Calu3 (cell line): ENCODE measurements at regions of chr3 and their contacts with region 1.

Region 1: GRCh38 chr3:152961323-152961722 is 126.4 kb downstream of the P2RY1 start:
- DNase-seq: peak; percentile 80
- H3K4me3 Mint-ChIP-seq: peak overlapping the region; percentile 4
- H3K27ac Mint-ChIP-seq: peak overlapping the region; percentile 23
- H3K4me1 Mint-ChIP-seq: peaks cover 65% of the 10 kb centered on the region
- H3K27me3 Mint-ChIP-seq: no peaks in the 10 kb centered on the region
- CTCF ChIP-seq: peak; percentile 78

Region 2: GRCh38 chr3:152508705-152509104 is 452.6 kb before region 1 on chr3:
- CTCF ChIA-PET with region 1: interaction called, 7 read pairs
- intact Hi-C with region 1: loop called (anchors 1 kb)
- DNase-seq: no peak
- H3K4me3 Mint-ChIP-seq: no peak overlapping the region
- H3K27ac Mint-ChIP-seq: no peak overlapping the region
- H3K4me1 Mint-ChIP-seq: no peaks in the 10 kb centered on the region
- H3K27me3 Mint-ChIP-seq: no peaks in the 10 kb centered on the region
- CTCF ChIP-seq: peak; percentile 47

Region 3: GRCh38 chr3:152595975-152596790 is 365.1 kb before region 1 on chr3:
- CTCF ChIA-PET with region 1: no interaction called
- intact Hi-C with region 1: loop called (anchors 2 kb)
- DNase-seq: peak; percentile 72
- H3K4me3 Mint-ChIP-seq: peak overlapping the region; percentile 9
- H3K27ac Mint-ChIP-seq: peak overlapping the region; percentile 69
- H3K4me1 Mint-ChIP-seq: peaks cover 45% of the 10 kb centered on the region
- H3K27me3 Mint-ChIP-seq: no peaks in the 10 kb centered on the region
- CTCF ChIP-seq: no peak

Region 4: DNA sequence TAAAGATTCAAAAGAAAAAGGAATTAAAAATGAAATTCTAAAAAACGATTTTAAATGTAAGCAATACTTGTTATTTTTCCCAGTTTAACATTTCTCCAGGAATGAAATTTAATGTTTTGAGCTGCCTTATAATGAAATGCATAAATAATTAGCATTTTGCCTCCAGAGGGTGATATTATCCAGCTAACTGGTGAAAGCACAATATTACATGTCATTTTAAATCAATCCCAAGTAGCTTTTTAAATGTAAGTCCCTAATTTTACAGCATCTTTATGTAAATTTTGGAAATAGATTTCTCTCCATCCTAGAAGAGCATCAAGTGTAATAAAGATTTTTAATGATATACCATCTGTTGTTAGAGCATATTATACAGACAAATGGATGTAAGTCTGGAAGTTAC is 265.5 kb before region 1 on chr3:
- CTCF ChIA-PET with region 1: interaction called, 4 read pairs
- intact Hi-C with region 1: loop called (anchors 2 kb)
- DNase-seq: no peak
- H3K4me3 Mint-ChIP-seq: no peak overlapping the region
- H3K27ac Mint-ChIP-seq: no peak overlapping the region
- H3K4me1 Mint-ChIP-seq: no peaks in the 10 kb centered on the region
- H3K27me3 Mint-ChIP-seq: no peaks in the 10 kb centered on the region
- CTCF ChIP-seq: no peak

Region 5: DNA sequence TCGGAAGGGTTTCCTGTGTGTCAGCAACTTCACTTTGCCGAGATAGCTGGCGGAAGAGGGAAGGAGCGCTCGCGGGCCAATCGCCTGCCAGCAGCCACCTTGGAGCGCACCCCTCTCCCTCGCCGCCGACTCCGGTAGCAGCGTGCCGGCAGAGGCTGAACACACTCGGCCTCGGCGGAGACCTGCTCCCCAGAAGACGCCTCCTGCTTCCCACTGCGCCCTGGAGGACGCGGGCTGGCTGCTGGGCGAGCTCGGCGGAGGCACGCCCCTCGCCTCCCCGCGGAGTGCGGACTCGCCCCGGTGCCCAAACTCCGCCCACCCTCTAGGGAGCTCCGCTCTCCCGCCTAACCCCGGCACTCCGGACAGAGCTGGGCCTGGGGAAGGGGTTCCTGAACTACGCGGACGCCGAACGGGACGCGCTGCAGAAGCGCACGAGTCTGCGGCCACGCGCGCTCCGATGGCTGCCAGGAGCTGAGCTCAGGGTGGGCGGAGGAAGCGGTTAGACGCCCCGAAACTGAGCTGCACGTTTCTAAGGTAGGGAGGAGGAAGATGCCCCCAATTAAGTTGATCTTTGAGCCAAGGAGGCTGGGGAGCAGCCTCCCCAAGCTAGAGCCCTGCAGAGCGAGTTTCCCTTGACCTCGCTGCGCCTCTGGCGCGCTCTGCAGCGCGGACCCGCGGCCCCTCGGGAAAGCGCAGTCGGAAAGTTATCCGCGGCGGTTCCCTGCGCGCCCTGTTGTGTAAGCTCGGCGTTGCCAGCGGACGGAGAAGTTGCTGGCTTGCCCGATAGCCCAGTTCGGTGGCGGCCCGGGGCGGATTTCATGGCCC is 126.3 kb before region 1 on chr3 and contains the start of gene P2RY1:
- CTCF ChIA-PET with region 1: interaction called, 5 read pairs
- intact Hi-C with region 1: loop called (anchors 1 kb)
- DNase-seq: peak; percentile 91
- H3K4me3 Mint-ChIP-seq: peak within 1 kb of the TSS; percentile 85
- H3K27ac Mint-ChIP-seq: peak within 1 kb of the TSS; percentile 46
- H3K4me1 Mint-ChIP-seq: peaks cover 59% of the 10 kb centered on the region
- H3K27me3 Mint-ChIP-seq: no peaks in the 10 kb centered on the region
- CTCF ChIP-seq: peak; percentile 52
- total RNA-seq, gene P2RY1: 19.6 and 21.0 TPM in 2 replicates

Region 6: GRCh38 chr3:153090973-153091372 is 129.7 kb after region 1 on chr3:
- CTCF ChIA-PET with region 1: no interaction called
- intact Hi-C with region 1: loop called (anchors 10 kb)
- DNase-seq: no peak
- H3K4me3 Mint-ChIP-seq: peak overlapping the region; percentile 7
- H3K27ac Mint-ChIP-seq: peak overlapping the region; percentile 66
- H3K4me1 Mint-ChIP-seq: peaks cover 67% of the 10 kb centered on the region
- H3K27me3 Mint-ChIP-seq: no peaks in the 10 kb centered on the region
- CTCF ChIP-seq: no peak